Activated CD8-positive, alpha-beta T cell treated with anti-CD3 and anti-CD28 coated beads for 36 hours (primary cell): ENCODE measurements at regions of chr2 and their contacts with region 1.

Region 1: DNA sequence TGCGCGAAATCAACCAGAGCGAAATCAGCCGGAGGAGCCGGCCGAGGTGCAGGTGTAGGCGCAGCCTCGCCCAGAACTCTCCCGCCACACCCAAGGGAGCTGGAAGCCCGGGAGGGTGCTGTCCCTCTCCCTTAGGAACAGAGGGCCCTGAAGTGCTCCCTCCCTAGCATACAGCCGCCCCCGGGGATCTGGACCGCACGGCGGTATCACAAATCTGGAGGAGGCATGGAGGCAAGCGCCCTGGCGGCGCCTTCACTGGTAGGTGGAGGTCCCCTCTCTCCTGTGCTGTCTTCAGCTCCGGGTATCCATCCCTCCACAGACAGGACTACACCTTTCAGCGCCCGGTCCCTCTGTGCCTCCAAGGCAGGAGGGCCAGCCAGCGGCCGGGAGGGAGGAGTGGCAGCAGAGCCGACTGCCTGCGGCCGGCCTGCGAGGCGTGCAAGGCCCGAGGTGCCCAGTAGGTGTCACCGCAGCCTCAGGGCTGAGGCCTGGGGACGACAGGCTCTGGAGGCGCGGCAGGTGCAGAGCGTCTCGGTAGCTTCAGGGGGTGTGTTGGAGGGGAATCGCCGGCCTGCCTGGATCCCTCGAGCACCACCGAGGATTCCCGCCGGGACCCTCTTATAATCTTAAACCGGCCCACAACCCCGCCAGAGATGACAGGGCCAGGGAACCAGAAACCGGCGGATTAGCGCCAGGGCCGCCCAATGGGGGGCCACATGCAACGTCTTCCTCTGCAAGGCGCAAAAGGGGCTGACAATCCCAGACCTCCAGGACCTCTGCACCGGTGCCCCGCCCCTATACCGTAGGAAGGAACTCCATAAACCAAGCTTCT is 2.8 kb downstream of the IHH start:
- DNase-seq: peak; percentile 84
- ATAC-seq: peak; percentile 97
- H3K4me3 Mint-ChIP-seq: peak overlapping the region; percentile 36
- H3K27ac Mint-ChIP-seq: no peak overlapping the region
- H3K4me1 Mint-ChIP-seq: peaks cover 19% of the 10 kb centered on the region
- H3K27me3 Mint-ChIP-seq: peaks cover 60% of the 10 kb centered on the region
- CTCF ChIP-seq: peak; percentile 97

Region 2: GRCh38 chr2:218745559-218746469 is 312.1 kb before region 1 on chr2:
- CTCF ChIA-PET with region 1: no interaction called
- POLR2A ChIA-PET with region 1: no interaction called
- intact Hi-C with region 1: no loop called
- DNase-seq: no peak
- ATAC-seq: no peak
- H3K4me3 Mint-ChIP-seq: no peak overlapping the region
- H3K27ac Mint-ChIP-seq: peak overlapping the region; percentile 44
- H3K4me1 Mint-ChIP-seq: peaks cover 19% of the 10 kb centered on the region
- H3K27me3 Mint-ChIP-seq: no peaks in the 10 kb centered on the region
- CTCF ChIP-seq: no peak

Region 3: GRCh38 chr2:218852911-218853667 is 204.8 kb before region 1 on chr2:
- CTCF ChIA-PET with region 1: no interaction called
- POLR2A ChIA-PET with region 1: no interaction called
- intact Hi-C with region 1: no loop called
- DNase-seq: peak; percentile 85
- ATAC-seq: peak; percentile 85
- H3K4me3 Mint-ChIP-seq: no peak overlapping the region
- H3K27ac Mint-ChIP-seq: no peak overlapping the region
- H3K4me1 Mint-ChIP-seq: no peaks in the 10 kb centered on the region
- H3K27me3 Mint-ChIP-seq: peaks cover 61% of the 10 kb centered on the region
- CTCF ChIP-seq: peak; percentile 89

Region 4: GRCh38 chr2:219073413-219074129 is 15.6 kb after region 1 on chr2:
- CTCF ChIA-PET with region 1: interaction called, 129 read pairs
- POLR2A ChIA-PET with region 1: no interaction called
- intact Hi-C with region 1: no loop called
- DNase-seq: peak; percentile 43
- ATAC-seq: no peak
- H3K4me3 Mint-ChIP-seq: no peak overlapping the region
- H3K27ac Mint-ChIP-seq: no peak overlapping the region
- H3K4me1 Mint-ChIP-seq: no peaks in the 10 kb centered on the region
- H3K27me3 Mint-ChIP-seq: no peaks in the 10 kb centered on the region
- CTCF ChIP-seq: peak; percentile 63

Region 5: DNA sequence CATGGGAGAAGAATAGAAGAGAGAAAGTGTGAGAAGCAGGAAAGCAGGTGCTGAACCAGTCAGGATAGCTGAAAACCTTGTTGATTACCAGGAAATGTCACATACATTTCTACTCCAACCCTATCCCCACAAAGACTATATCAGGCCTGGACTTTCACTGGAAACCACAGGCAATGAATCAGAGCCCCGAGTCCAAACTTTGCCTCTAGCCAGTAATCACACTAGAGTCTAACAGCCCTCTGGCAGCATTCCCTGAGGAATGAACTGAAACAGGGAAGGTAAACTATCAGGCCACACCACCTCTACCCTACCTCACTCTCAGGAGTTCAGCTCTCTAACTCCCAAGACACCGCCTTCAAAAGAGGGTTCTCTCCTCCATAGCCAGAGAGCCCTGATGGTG is 21.5 kb after region 1 on chr2:
- CTCF ChIA-PET with region 1: interaction called, 129 read pairs
- POLR2A ChIA-PET with region 1: interaction called, 3 read pairs
- intact Hi-C with region 1: no loop called
- DNase-seq: no peak
- ATAC-seq: no peak
- H3K4me3 Mint-ChIP-seq: no peak overlapping the region
- H3K27ac Mint-ChIP-seq: no peak overlapping the region
- H3K4me1 Mint-ChIP-seq: no peaks in the 10 kb centered on the region
- H3K27me3 Mint-ChIP-seq: no peaks in the 10 kb centered on the region
- CTCF ChIP-seq: no peak

Region 6: GRCh38 chr2:219087361-219087760 is 29.4 kb after region 1 on chr2:
- CTCF ChIA-PET with region 1: interaction called, 22 read pairs
- POLR2A ChIA-PET with region 1: no interaction called
- intact Hi-C with region 1: no loop called
- DNase-seq: no peak
- ATAC-seq: no peak
- H3K4me3 Mint-ChIP-seq: no peak overlapping the region
- H3K27ac Mint-ChIP-seq: no peak overlapping the region
- H3K4me1 Mint-ChIP-seq: peaks cover 14% of the 10 kb centered on the region
- H3K27me3 Mint-ChIP-seq: no peaks in the 10 kb centered on the region
- CTCF ChIP-seq: no peak

Region 7: DNA sequence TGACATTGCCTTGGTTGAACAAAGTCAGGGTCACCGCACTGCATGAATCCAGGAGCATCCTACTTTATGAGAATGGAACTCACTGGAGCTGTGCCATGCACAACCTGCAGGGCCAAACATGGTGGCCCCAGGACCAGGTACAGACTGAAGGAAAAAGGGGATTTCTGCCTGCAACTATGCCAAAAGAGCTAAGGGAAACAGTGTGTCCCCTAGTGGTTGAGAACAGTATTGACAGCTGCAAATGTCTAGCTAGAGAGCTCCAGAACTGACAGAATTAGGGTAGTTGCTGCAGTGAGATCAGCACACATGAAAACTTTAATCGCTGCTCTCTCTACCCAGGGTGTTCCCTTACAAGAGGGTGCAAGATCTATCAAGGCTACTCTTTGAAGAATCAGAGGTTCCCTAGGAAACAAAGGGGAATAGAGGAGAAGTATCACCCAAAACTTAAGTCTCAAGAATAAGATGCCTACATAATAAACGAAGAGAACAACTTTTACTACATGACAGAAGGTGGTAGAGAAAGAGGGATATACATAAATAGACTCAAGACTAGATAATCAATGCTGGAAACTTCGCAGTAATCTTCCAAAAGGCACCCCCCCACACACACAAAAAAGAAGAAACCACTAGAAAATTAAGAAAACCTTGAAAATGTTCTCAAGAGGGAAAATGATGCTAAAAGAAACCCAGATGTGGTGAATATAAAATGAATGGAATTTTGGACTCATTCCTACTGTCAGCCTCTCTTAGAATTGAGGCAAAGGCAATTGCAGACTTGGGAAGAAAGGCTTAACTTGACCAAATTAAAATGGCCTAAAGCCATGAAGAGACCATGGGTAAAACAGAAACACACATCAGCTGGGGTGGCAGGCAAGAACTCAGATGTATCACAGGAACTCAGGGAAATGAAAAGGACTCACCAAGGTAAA is 46.4 kb after region 1 on chr2:
- CTCF ChIA-PET with region 1: interaction called, 431 read pairs
- POLR2A ChIA-PET with region 1: no interaction called
- intact Hi-C with region 1: no loop called
- DNase-seq: peak; percentile 30
- ATAC-seq: peak; percentile 90
- H3K4me3 Mint-ChIP-seq: no peak overlapping the region
- H3K27ac Mint-ChIP-seq: peak overlapping the region; percentile 28
- H3K4me1 Mint-ChIP-seq: peaks cover 32% of the 10 kb centered on the region
- H3K27me3 Mint-ChIP-seq: no peaks in the 10 kb centered on the region
- CTCF ChIP-seq: peak; percentile 82

Region 8: GRCh38 chr2:219160186-219161017 is 102.5 kb after region 1 on chr2 and contains the start of gene NHEJ1:
- CTCF ChIA-PET with region 1: interaction called, 192 read pairs
- POLR2A ChIA-PET with region 1: interaction called, 3 read pairs
- intact Hi-C with region 1: loop called (anchors 2 kb)
- DNase-seq: peak; percentile 98
- ATAC-seq: peak; percentile 92
- H3K4me3 Mint-ChIP-seq: peak within 1 kb of the TSS; percentile 85
- H3K27ac Mint-ChIP-seq: peak within 1 kb of the TSS; percentile 93
- H3K4me1 Mint-ChIP-seq: peaks cover 18% of the 10 kb centered on the region
- H3K27me3 Mint-ChIP-seq: no peaks in the 10 kb centered on the region
- CTCF ChIP-seq: peak; percentile 99
- total RNA-seq, gene NHEJ1: 22.4 to 26.3 TPM

Region 9: DNA sequence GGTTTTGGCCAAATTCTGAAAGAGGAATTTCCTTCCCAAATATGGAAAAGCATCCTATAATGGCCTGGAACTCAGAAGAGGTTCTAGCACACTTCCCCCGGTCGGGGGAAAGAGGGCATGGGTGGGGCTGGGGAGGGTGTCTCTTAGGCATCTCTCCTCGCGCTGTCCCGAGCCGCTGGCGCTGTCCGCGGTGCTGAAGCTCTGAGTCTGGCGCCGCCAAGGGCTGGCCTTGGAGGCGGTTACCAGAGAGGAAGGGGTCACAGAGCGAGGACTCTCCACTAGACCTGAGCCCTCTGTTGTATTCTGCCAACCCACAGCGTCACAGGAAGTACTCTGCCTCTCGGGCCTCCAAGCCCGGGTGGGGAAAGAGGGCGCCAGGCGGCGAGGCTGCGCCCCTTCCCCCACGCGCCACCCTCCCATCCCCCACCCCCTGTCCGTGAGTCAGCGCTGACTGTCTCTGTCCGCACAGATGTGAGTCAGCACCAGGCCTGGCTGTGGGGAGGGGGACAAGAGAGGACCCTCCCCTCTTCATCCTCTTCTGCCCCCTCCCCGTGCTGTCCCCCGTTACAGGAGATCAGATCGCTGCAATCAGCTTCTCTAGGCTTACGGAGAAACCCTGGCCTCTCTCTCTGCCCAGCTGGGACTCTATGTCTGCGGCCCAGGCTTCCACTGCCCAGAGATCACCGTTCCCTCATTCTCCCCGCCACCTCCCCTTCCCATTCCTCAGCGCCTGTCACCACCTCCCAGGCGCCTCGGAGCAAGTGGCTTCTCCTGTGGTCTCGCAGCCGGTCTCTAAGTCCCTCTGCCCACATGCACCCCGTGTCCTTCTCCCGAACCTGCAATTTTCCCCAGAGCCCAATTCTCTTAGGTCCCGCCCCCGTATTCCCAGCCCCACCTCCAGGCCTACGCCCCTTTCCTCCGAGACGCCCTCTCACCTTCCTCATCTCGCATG is 250.5 kb after region 1 on chr2:
- CTCF ChIA-PET with region 1: no interaction called
- POLR2A ChIA-PET with region 1: no interaction called
- intact Hi-C with region 1: loop called (anchors 10 kb)
- DNase-seq: peak; percentile 77
- ATAC-seq: peak; percentile 94
- H3K4me3 Mint-ChIP-seq: no peak overlapping the region
- H3K27ac Mint-ChIP-seq: no peak overlapping the region
- H3K4me1 Mint-ChIP-seq: peaks cover 6% of the 10 kb centered on the region
- H3K27me3 Mint-ChIP-seq: peaks cover 41% of the 10 kb centered on the region
- CTCF ChIP-seq: no peak